A673 (cell line): ENCODE measurements at regions of chr5 and their contacts with region 1.

Region 1: DNA sequence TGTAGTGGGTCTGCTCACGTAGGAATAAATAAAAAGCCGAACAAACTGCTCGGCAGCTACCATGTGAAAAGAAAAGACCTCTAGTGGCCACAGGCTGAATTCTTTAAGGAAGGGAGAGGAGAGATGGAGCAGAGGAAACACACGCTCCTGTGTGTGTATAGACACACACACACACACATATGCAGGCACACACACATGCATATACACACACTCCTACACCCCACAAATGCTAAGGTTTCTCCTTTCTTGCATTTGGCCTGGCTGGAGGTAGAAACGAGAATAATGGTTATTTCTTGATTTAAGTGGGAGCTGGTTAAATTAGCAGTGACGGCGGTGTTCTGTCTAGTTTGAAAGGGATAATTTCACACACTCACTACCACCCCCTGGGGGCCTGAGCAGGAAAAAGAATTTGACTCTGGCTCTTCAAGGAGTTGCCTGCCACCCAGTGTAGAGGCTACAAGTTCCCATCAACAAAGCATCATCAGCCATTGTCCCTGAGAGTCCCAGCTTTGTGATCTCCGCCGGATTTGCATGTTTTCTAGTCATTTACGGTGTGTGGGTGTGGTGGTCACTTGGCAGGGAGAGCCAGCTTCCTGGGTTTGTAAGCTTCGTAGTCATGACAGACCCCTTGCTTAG is at the start of gene INSYN2B:
- DNase-seq: peak; percentile 91
- H3K4me3 ChIP-seq: peak within 1 kb of the TSS; percentile 57
- H3K27ac ChIP-seq: peak within 1 kb of the TSS; percentile 66
- H3K4me1 ChIP-seq: peaks cover 15% of the 10 kb centered on the region
- H3K27me3 ChIP-seq: no peaks in the 10 kb centered on the region
- CTCF ChIP-seq: peak; percentile 78
- total RNA-seq, gene INSYN2B: 5.6 and 10.8 TPM in 2 replicates

Region 2: GRCh38 chr5:169416583-169417196 is 563.8 kb before region 1 on chr5:
- CTCF ChIA-PET with region 1: no interaction called
- POLR2A ChIA-PET with region 1: no interaction called
- intact Hi-C with region 1: no loop called
- DNase-seq: peak; percentile 8
- H3K4me3 ChIP-seq: no peak overlapping the region
- H3K27ac ChIP-seq: no peak overlapping the region
- H3K4me1 ChIP-seq: no peaks in the 10 kb centered on the region
- H3K27me3 ChIP-seq: peaks cover 15% of the 10 kb centered on the region
- CTCF ChIP-seq: no peak

Region 3: GRCh38 chr5:169803077-169803981 is 177.2 kb before region 1 on chr5:
- CTCF ChIA-PET with region 1: no interaction called
- POLR2A ChIA-PET with region 1: no interaction called
- intact Hi-C with region 1: loop called (anchors 5 kb)
- DNase-seq: peak; percentile 69
- H3K4me3 ChIP-seq: no peak overlapping the region
- H3K27ac ChIP-seq: peak overlapping the region; percentile 27
- H3K4me1 ChIP-seq: peaks cover 12% of the 10 kb centered on the region
- H3K27me3 ChIP-seq: no peaks in the 10 kb centered on the region
- CTCF ChIP-seq: no peak